Naive thymus-derived CD4-positive, alpha-beta T cell (primary cell): ENCODE measurements at regions of chr12 and their contacts with region 1.

Region 1: GRCh38 chr12:86948851-86949250 is 692.7 kb upstream of the MGAT4C start:
- DNase-seq: no peak
- ATAC-seq: no peak
- H3K4me3 ChIP-seq: no peak overlapping the region
- H3K4me3 Mint-ChIP-seq: no peak overlapping the region
- H3K27ac ChIP-seq: no peak overlapping the region
- H3K27ac Mint-ChIP-seq: no peak overlapping the region
- H3K4me1 ChIP-seq: no peaks in the 10 kb centered on the region
- H3K4me1 Mint-ChIP-seq: no peaks in the 10 kb centered on the region
- H3K27me3 ChIP-seq: no peaks in the 10 kb centered on the region
- H3K27me3 Mint-ChIP-seq: no peaks in the 10 kb centered on the region

Region 2: GRCh38 chr12:86959766-86960458 is 11.1 kb after region 1 on chr12:
- CTCF ChIA-PET with region 1: no interaction called
- POLR2A ChIA-PET with region 1: no interaction called
- intact Hi-C with region 1: loop called in 1 of 2 experiments (anchors 2 kb)
- DNase-seq: no peak
- ATAC-seq: no peak
- H3K4me3 ChIP-seq: no peak overlapping the region
- H3K4me3 Mint-ChIP-seq: no peak overlapping the region
- H3K27ac ChIP-seq: no peak overlapping the region
- H3K27ac Mint-ChIP-seq: no peak overlapping the region
- H3K4me1 ChIP-seq: no peaks in the 10 kb centered on the region
- H3K4me1 Mint-ChIP-seq: no peaks in the 10 kb centered on the region
- H3K27me3 ChIP-seq: no peaks in the 10 kb centered on the region
- H3K27me3 Mint-ChIP-seq: no peaks in the 10 kb centered on the region